ENCODE measurements at regions of chr11 and their contacts with region 1.

Region 1: DNA sequence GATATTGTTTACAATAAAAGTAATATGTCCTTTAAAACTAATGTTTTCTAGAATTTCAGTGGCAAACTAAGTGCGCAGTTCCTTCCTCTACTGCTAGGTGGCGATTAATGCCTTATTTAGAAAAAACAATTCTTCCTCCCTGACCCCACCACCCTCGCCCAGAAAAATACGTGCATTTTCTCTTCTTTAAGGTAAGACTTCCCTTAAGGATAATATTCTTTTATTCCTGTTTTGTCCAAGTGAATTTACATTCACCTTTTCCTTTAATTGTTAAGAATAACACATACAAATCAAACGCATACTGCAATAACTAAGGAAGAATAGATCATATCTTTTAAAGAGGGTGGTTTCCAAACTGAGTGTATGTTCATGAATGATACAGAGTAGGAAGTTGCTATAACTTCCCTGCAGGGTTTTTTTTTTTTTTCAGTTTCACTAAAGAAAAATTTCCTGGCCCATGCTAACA is 17.0 kb upstream of the PSMA1 start:
- DNase-seq: peak in 7 of 9 donors; percentile 39 to 74 (median 69)
- ATAC-seq: peak; percentile 93
- H3K4me3 ChIP-seq: no peak overlapping the region
- H3K4me3 Mint-ChIP-seq: peak overlapping the region in 9 of 10 donors; percentile 48 to 86 (median 79)
- H3K27ac ChIP-seq: peak overlapping the region; percentile 69
- H3K27ac Mint-ChIP-seq: peak overlapping the region; percentile 77 to 99 (median 90)
- H3K4me1 ChIP-seq: peaks cover 0 to 17% of the 10 kb centered on the region in 2 donors
- H3K4me1 Mint-ChIP-seq: peaks cover 9 to 51% (median 45%) of the 10 kb centered on the region in 7 donors
- H3K27me3 ChIP-seq: no peaks in the 10 kb centered on the region
- H3K27me3 Mint-ChIP-seq: no peaks in the 10 kb centered on the region

Region 2: DNA sequence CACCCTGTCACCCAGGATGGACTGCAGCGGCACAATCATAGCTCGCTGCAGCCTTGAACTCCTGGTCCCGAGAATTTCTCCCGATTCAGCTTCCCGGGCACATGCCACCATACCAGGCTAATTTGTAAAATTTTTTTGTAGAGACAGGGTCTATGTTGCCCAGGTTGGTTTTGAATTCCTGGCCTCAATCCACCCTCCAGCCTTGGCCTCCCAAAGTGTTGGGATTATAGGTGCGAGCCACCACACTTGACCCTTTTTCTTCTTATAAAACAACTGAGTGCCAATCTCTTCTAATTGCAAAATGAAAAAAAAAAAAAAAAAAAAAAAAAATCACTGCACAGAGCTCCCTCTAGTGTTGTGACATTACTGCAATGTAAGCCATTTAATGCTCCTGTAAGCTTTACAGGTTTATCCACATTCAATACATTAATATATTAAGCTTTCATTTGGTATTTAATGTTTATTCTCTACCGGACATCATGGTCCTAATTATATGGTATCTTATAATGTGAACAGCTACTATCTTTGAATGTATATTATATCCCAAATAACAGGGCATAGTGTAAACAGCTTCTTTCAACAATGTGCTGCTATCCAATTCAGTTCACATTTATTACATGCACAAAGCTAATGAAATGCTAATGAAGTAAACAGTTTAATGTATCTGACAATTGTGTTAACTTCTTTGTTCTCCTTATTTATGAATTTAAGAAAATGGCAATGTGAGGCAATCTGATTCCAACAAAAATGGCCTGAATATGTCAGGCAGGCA is 82.1 kb before region 1 on chr11:
- CTCF ChIA-PET with region 1: no interaction called
- POLR2A ChIA-PET with region 1: no interaction called
- intact Hi-C with region 1: no loop called
- DNase-seq: peak in 5 of 9 donors; percentile 4 to 22 (median 12)
- ATAC-seq: peak; percentile 67
- H3K4me3 ChIP-seq: no peak overlapping the region
- H3K4me3 Mint-ChIP-seq: no peak overlapping the region
- H3K27ac ChIP-seq: no peak overlapping the region
- H3K27ac Mint-ChIP-seq: peak overlapping the region in 4 of 9 donors; percentile 1 to 52 (median 46)
- H3K4me1 ChIP-seq: peaks cover 0 to 3% of the 10 kb centered on the region in 2 donors
- H3K4me1 Mint-ChIP-seq: peaks cover 0 to 10% (median 0%) of the 10 kb centered on the region in 7 donors
- H3K27me3 ChIP-seq: no peaks in the 10 kb centered on the region
- H3K27me3 Mint-ChIP-seq: no peaks in the 10 kb centered on the region

Region 3: DNA sequence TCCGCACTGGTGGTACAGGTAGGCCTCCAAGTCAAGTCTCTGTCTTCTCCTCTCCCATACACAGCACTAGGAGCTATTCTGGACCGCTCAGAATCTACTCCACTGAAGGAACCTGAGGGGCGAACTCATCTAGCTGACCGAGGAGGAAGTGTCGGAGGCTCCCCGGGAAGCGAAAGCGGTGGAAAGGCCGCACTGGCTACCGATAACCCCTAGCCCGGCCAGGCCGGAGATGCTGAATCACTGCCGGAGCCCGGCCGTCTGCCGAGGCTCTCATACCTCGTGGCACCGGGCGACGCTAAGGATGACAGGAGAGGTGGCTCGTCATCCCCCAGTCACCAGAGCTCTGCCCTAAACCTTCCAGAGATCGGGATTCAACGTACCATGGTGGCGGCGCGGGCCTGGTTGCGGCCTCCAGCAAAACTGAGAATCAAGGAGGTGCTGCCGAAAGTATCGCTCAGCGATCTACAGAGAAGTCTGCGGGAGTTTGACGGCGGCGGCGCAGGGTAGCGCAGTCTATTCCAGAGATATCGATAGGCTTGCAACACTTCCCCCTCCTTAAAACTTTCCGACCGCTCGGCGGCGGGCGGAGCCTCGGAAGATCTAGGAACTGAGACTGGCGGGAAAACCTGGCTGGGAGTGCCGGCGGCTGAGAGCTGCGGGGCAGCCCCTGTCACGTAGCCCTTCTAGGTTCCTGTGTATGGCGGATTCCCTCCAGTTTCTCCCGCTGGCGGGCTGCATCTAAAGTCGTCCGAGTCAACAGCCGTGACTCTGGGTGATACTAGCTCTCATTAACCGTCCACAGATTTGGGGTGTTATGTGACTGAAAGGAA is 17.0 kb before region 1 on chr11 and contains the start of gene PSMA1:
- CTCF ChIA-PET with region 1: interaction called, 3 read pairs
- POLR2A ChIA-PET with region 1: interaction called, 3 read pairs
- intact Hi-C with region 1: loop called (anchors 1 to 2 kb)
- DNase-seq: peak; percentile 72 to 95 (median 89)
- ATAC-seq: peak; percentile 96
- H3K4me3 ChIP-seq: peak within 1 kb of the TSS; percentile 70
- H3K4me3 Mint-ChIP-seq: peak within 1 kb of the TSS; percentile 86 to 99 (median 97)
- H3K27ac ChIP-seq: peak within 1 kb of the TSS; percentile 96
- H3K27ac Mint-ChIP-seq: peak within 1 kb of the TSS; percentile 93 to 99 (median 96)
- H3K4me1 ChIP-seq: peaks cover 14 to 16% of the 10 kb centered on the region in 2 donors
- H3K4me1 Mint-ChIP-seq: peaks cover 15 to 43% (median 38%) of the 10 kb centered on the region in 7 donors
- H3K27me3 ChIP-seq: no peaks in the 10 kb centered on the region
- H3K27me3 Mint-ChIP-seq: no peaks in the 10 kb centered on the region
- total RNA-seq, gene PSMA1: 103 to 253 (median 120) TPM

Region 4: GRCh38 chr11:14554959-14555358 is 17.8 kb after region 1 on chr11:
- CTCF ChIA-PET with region 1: interaction called, 3 read pairs
- POLR2A ChIA-PET with region 1: interaction called, 6 read pairs
- intact Hi-C with region 1: loop called in 1 of 2 experiments (anchors 1 kb)
- DNase-seq: peak in 7 of 9 donors; percentile 76 to 92 (median 87)
- ATAC-seq: peak; percentile 95
- H3K4me3 ChIP-seq: no peak overlapping the region
- H3K4me3 Mint-ChIP-seq: peak overlapping the region in 9 of 10 donors; percentile 42 to 85 (median 65)
- H3K27ac ChIP-seq: peak overlapping the region; percentile 73
- H3K27ac Mint-ChIP-seq: peak overlapping the region; percentile 82 to 99 (median 95)
- H3K4me1 ChIP-seq: peaks cover 19 to 23% of the 10 kb centered on the region in 2 donors
- H3K4me1 Mint-ChIP-seq: peaks cover 23 to 72% (median 60%) of the 10 kb centered on the region in 7 donors
- H3K27me3 ChIP-seq: no peaks in the 10 kb centered on the region
- H3K27me3 Mint-ChIP-seq: no peaks in the 10 kb centered on the region

Region 5: DNA sequence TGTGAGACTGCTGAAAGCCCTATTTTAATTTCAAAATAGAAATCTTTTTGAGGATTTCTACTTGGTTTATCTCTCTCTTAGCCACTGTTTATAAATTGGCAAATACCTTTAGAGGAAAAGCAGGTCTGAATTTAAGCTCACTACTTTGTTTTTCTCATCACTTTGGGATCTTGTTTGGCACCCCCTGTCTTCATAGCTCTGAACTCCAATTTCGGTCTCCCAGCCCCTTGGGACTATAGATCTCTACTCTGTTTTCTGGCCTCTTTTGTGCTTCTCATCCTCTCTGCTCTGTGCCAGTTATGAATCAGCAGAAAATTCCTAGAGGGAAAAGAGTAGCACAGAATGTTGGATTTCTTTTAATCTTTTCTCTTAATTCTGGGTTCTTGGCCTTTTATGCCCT is 236.6 kb after region 1 on chr11:
- CTCF ChIA-PET with region 1: interaction called, 3 read pairs
- POLR2A ChIA-PET with region 1: no interaction called
- intact Hi-C with region 1: loop called in 1 of 2 experiments (anchors 1 kb)
- DNase-seq: peak in 4 of 9 donors; percentile 35 to 48 (median 44)
- ATAC-seq: peak; percentile 48
- H3K4me3 ChIP-seq: no peak overlapping the region
- H3K4me3 Mint-ChIP-seq: peak overlapping the region in 3 of 10 donors; percentile 33 to 49 (median 36)
- H3K27ac ChIP-seq: no peak overlapping the region
- H3K27ac Mint-ChIP-seq: peak overlapping the region; percentile 1 to 87 (median 62)
- H3K4me1 ChIP-seq: peaks cover 0 to 28% of the 10 kb centered on the region in 2 donors
- H3K4me1 Mint-ChIP-seq: peaks cover 9 to 76% (median 63%) of the 10 kb centered on the region in 7 donors
- H3K27me3 ChIP-seq: no peaks in the 10 kb centered on the region
- H3K27me3 Mint-ChIP-seq: no peaks in the 10 kb centered on the region

Region 6: DNA sequence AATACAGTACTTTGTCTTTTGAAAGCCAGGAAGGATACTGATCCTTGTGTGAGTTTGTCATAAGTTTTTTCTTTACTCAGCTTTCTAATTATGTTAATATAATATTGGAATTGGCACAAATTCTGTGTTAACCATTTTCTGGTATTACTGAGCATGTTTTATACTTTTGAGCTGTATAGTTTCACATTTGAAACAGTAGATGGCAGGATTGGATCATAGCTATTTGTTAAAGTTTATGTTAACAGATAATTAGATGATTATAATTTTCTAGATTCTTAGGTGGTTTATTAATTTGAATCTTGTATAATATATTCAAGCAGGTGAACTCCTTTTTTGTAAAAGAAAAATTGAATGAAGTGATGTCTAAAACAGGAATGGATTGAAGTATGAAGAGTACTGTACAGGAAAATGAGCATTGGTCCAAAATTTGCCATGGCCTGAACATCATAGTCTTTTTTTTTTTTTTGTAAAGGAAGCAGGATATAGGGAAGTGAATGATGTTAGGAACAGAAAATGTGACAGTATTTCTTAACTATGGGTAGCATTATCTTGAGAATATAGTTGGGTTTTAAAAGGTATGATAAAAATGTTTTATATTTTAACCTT is 252.8 kb after region 1 on chr11:
- CTCF ChIA-PET with region 1: interaction called, 6 read pairs
- POLR2A ChIA-PET with region 1: interaction called, 8 read pairs
- intact Hi-C with region 1: loop called in 1 of 2 experiments (anchors 1 kb)
- DNase-seq: peak in 4 of 9 donors; percentile 19 to 37 (median 36)
- ATAC-seq: peak; percentile 42
- H3K4me3 ChIP-seq: no peak overlapping the region
- H3K4me3 Mint-ChIP-seq: no peak overlapping the region
- H3K27ac ChIP-seq: no peak overlapping the region
- H3K27ac Mint-ChIP-seq: peak overlapping the region in 7 of 9 donors; percentile 2 to 74 (median 51)
- H3K4me1 ChIP-seq: no peaks in the 10 kb centered on the region
- H3K4me1 Mint-ChIP-seq: peaks cover 4 to 39% (median 17%) of the 10 kb centered on the region in 7 donors
- H3K27me3 ChIP-seq: no peaks in the 10 kb centered on the region
- H3K27me3 Mint-ChIP-seq: no peaks in the 10 kb centered on the region

Region 7: DNA sequence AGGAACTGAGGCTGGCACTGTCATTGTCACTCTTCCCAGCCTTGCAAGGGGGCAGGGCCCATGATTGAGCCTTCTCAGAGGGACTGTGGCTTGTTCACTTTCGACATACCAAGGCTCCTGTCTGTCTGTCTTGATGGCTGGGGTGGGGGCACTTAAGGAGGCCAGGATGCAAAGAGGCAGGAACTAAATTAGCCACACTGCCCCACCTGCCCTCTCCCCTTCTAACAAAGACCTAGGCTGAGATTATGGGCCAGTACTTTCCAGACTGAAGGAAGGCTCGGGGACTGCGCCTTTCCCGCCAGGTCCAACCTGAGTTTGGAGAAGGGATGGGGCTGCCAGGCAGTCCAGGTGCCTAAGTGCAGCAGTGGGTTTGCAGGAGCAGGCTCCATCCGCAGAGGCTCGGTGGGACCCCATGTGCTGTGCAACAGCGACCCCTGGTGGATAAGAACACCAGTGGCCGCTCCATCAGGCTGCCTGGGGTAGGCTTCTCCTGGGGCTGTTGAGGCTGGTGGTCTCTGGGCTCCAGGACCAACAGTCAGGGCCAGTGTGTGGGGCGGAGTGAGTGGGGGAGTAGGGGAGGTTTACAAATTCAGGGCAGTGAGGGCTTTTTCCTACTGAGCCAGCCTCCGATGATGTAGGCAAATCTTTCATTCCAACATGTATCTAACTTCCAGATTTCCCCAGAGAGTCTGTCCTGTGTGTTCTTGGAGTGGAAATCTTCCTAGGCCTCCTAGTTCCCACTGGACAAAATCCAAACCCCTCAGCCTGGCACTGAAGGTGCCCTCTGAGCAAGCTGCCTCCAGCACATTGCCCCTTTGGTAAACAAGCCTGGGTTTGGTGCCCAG is 671.4 kb after region 1 on chr11:
- CTCF ChIA-PET with region 1: no interaction called
- POLR2A ChIA-PET with region 1: no interaction called
- intact Hi-C with region 1: loop called in 1 of 2 experiments (anchors 10 kb)
- DNase-seq: peak; percentile 33 to 78 (median 66)
- ATAC-seq: peak; percentile 86
- H3K4me3 ChIP-seq: no peak overlapping the region
- H3K4me3 Mint-ChIP-seq: no peak overlapping the region
- H3K27ac ChIP-seq: no peak overlapping the region
- H3K27ac Mint-ChIP-seq: no peak overlapping the region
- H3K4me1 ChIP-seq: no peaks in the 10 kb centered on the region
- H3K4me1 Mint-ChIP-seq: no peaks in the 10 kb centered on the region
- H3K27me3 ChIP-seq: no peaks in the 10 kb centered on the region
- H3K27me3 Mint-ChIP-seq: peaks cover 0 to 2% (median 0%) of the 10 kb centered on the region in 5 donors